K562 (cell line): ENCODE measurements at regions of chr1 and their contacts with region 1.

Region 1: GRCh38 chr1:3900119-3900968 is at the start of gene C1orf174:
- DNase-seq: peak; percentile 95 to 99 (median 96)
- ATAC-seq: peak; percentile 90
- H3K4me3 ChIP-seq: peak within 1 kb of the TSS; percentile 74
- H3K27ac ChIP-seq: peak within 1 kb of the TSS; percentile 100
- H3K4me1 ChIP-seq: peaks cover 0 to 36% of the 10 kb centered on the region in 2 experiments; a peak in 4 of 5 replicates
- H3K27me3 ChIP-seq: no peaks in the 10 kb centered on the region
- CTCF ChIP-seq: no peak
- EP300 ChIP-seq: 0 out of 2 replicates have a peak, but pooled peaks have one; percentile 23
- POLR2A ChIP-seq: peak; percentile 72
- RAD21 ChIP-seq: no peak
- polyA plus RNA-seq, gene C1orf174: 42.0 to 50.2 TPM

Region 2: GRCh38 chr1:3649342-3650247 is 250.7 kb before region 1 on chr1 and contains the start of gene WRAP73:
- CTCF ChIA-PET with region 1: no interaction called
- POLR2A ChIA-PET with region 1: no interaction called
- in situ Hi-C with region 1: no loop called
- intact Hi-C with region 1: loop called (anchors 1 kb)
- DNase-seq: peak; percentile 93 to 98 (median 94)
- ATAC-seq: peak; percentile 96
- H3K4me3 ChIP-seq: peak within 1 kb of the TSS; percentile 70
- H3K27ac ChIP-seq: peak within 1 kb of the TSS; percentile 29; the same call in 2 of the 3 replicates
- H3K4me1 ChIP-seq: peaks cover 11 to 38% of the 10 kb centered on the region in 2 experiments
- H3K27me3 ChIP-seq: peaks cover 19 to 25% of the 10 kb centered on the region in 2 experiments; a peak in 4 of 5 replicates
- CTCF ChIP-seq: peak; percentile 63 to 66 (median 64); a peak in 5 of 6 replicates
- EP300 ChIP-seq: peak; percentile 23; the same call in 1 of the 2 replicates
- POLR2A ChIP-seq: peak; percentile 83
- RAD21 ChIP-seq: peak in 1 of 2 experiments; percentile 36; a peak in 2 of 4 replicates
- polyA plus RNA-seq, gene WRAP73: 4.3 to 4.7 TPM

Region 3: DNA sequence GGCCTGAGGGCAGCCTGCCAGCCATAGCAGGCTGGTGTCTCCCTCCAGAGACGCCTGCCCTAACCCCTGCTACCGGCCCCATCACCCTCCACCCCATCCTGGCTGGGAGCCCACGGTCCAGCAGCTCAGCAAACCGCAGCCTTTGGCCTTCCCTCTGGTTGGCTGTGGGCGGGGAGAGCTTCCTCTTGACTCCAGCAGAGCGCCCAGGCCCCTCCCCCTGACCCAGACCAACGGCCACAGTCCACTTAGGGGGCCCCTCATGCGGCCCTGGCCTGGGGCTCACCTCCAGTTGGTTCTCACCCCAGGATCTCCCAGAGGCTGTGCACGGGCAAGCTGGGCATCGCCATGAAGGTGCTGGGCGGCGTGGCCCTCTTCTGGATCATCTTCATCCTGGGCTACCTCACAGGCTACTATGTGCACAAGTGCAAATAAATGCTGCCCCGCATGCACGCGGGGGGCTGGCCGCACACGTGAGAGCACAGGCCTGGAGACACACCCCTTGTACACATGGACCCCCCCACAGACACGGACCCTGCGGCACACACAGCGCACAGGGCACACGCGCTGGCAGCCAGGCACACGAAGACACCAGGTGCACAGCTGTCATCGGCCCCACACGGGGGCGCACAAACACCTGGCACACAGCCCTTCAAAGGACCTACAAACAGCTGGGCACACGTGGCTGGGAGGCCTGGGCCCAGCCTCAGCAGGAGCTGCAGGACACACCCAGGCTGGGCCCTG is 124.7 kb before region 1 on chr1:
- CTCF ChIA-PET with region 1: interaction called, 5 read pairs
- POLR2A ChIA-PET with region 1: interaction called, 4 read pairs
- in situ Hi-C with region 1: no loop called
- intact Hi-C with region 1: loop called (anchors 2 kb)
- DNase-seq: peak; percentile 85 to 98 (median 91)
- ATAC-seq: peak; percentile 71
- H3K4me3 ChIP-seq: peak overlapping the region; percentile 7; the same call in 1 of the 2 replicates
- H3K27ac ChIP-seq: peak overlapping the region; percentile 66
- H3K4me1 ChIP-seq: peaks cover 26 to 87% of the 10 kb centered on the region in 2 experiments
- H3K27me3 ChIP-seq: no peaks in the 10 kb centered on the region
- CTCF ChIP-seq: peak; percentile 66 to 79 (median 69)
- EP300 ChIP-seq: no peak; the same call in 1 of the 2 replicates
- POLR2A ChIP-seq: peak; percentile 47; the same call in 1 of the 2 replicates
- RAD21 ChIP-seq: peak; percentile 15 to 66; a peak in 3 of 4 replicates

Region 4: DNA sequence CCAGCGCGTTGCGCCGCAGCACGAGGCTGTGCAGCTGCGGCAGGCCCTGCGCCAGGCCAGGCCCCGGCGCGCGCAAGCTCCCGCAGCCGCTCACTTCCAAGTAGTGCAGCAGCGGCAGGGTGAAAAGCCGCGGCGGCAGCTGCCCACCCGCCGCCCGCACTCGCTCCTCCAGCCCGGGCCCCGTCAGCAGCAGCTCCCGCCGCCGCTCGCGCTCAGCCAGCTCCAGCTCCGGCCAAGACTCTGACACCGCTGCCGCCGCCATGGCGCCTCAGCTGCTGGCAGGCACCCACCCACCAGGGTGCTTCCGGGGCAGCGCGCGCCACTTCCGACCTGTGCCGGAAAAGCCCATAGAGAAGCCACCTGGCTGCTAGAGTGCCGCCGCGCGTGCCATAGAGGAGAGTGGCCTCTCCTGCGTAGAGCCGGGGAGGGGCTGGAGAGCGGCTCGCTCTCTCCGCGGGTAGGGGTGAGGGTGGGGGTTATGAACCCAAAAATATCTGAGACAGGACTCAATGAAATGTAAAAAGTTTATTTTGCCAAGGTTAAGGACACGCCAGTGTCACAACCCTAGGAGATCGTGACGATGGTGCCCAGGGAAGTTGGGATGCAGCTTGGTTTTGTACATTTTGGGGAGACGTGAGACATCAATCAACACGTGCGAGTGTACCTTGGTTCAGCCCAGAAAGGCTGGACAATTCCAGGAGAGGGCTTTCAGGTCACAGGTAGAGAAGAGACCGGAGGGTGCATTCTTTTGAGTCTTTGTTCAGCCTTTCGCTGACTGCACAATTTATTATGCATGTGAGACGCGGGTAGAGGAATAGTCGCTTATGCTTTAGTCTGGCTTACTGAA is 103.9 kb before region 1 on chr1 and contains the start of gene LRRC47:
- CTCF ChIA-PET with region 1: no interaction called
- POLR2A ChIA-PET with region 1: interaction called, 3 read pairs
- in situ Hi-C with region 1: no loop called
- intact Hi-C with region 1: loop called (anchors 1 kb)
- DNase-seq: peak; percentile 95 to 98 (median 97)
- ATAC-seq: peak; percentile 98
- H3K4me3 ChIP-seq: peak within 1 kb of the TSS; percentile 82
- H3K27ac ChIP-seq: peak within 1 kb of the TSS; percentile 61
- H3K4me1 ChIP-seq: peaks cover 25 to 39% of the 10 kb centered on the region in 2 experiments
- H3K27me3 ChIP-seq: no peaks in the 10 kb centered on the region
- CTCF ChIP-seq: peak in 1 of 3 experiments; percentile 18; a peak in 1 of 6 replicates
- EP300 ChIP-seq: peak; percentile 68; the same call in 1 of the 2 replicates
- POLR2A ChIP-seq: peak; percentile 82
- RAD21 ChIP-seq: no peak
- polyA plus RNA-seq, gene LRRC47: 4.6 to 5.3 TPM

Region 5: DNA sequence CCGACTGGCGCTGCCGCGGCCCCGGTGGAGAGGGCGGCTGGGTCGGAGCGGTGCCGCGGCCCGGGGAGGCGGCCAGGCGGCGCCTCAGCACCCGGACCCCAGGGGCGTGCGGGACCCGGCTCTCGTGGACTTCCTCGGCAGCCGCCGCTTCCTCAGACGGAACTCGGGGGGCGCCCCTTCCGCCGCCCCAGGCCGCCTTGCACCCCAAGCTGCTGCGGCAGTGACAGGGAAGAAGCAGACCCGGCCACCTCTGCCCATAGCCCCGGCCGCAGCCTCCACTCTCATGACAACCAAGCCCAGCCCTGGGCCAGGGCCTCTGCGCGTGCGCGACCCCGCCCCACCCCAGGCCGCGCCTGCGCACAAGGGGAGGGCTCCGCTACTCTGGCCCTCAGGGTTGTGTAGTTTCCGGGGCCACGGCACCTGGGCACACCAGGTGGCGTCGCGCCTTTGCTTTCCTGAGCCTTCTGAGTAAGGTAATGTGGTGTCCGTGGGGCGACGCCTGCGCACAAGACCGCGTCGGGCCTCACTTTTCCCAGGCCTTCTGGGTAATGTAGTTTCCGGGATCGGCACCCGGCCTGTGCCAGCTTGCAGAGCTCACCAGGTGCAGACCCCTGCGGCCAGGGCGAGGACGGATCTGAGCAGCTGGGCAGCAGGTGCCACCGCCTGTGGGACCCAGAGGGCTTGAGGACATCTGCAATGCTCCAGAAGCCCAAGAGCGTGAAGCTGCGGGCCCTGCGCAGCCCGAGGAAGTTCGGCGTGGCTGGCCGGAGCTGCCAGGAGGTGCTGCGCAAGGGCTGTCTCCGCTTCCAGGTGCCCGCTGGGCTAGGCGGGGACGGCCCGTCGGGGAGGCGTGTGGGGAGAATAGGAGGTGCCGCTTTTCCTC is 43.2 kb before region 1 on chr1 and contains the starts of genes CEP104 and DFFB:
- CTCF ChIA-PET with region 1: no interaction called
- POLR2A ChIA-PET with region 1: interaction called, 3 read pairs
- in situ Hi-C with region 1: no loop called
- intact Hi-C with region 1: loop called (anchors 1 kb)
- DNase-seq: peak; percentile 100
- ATAC-seq: peak; percentile 98
- H3K4me3 ChIP-seq: peak within 1 kb of the TSS; percentile 90
- H3K27ac ChIP-seq: peak within 1 kb of the TSS; percentile 68
- H3K4me1 ChIP-seq: peaks cover 10 to 37% of the 10 kb centered on the region in 2 experiments; a peak in 3 of 5 replicates
- H3K27me3 ChIP-seq: no peaks in the 10 kb centered on the region
- CTCF ChIP-seq: peak; percentile 72 to 91 (median 85)
- EP300 ChIP-seq: no peak
- POLR2A ChIP-seq: peak; percentile 79
- RAD21 ChIP-seq: peak; percentile 53 to 76
- polyA plus RNA-seq, gene CEP104: 11.2 to 13.4 TPM
- polyA plus RNA-seq, gene DFFB: 2.3 to 6.6 TPM

Region 6: GRCh38 chr1:3869751-3870301 is 30.5 kb before region 1 on chr1:
- CTCF ChIA-PET with region 1: no interaction called
- POLR2A ChIA-PET with region 1: interaction called, 3 read pairs
- in situ Hi-C with region 1: no loop called
- intact Hi-C with region 1: loop called (anchors 1 kb)
- DNase-seq: peak; percentile 81 to 93 (median 86)
- ATAC-seq: peak; percentile 100
- H3K4me3 ChIP-seq: no peak overlapping the region
- H3K27ac ChIP-seq: no peak overlapping the region
- H3K4me1 ChIP-seq: peaks cover 17 to 32% of the 10 kb centered on the region in 2 experiments; a peak in 4 of 5 replicates
- H3K27me3 ChIP-seq: no peaks in the 10 kb centered on the region
- CTCF ChIP-seq: peak; percentile 70 to 84 (median 71)
- EP300 ChIP-seq: peak; percentile 24; the same call in 1 of the 2 replicates
- POLR2A ChIP-seq: no peak
- RAD21 ChIP-seq: peak in 1 of 2 experiments; percentile 56; a peak in 2 of 4 replicates

Region 7: GRCh38 chr1:3886691-3887090 is 13.7 kb before region 1 on chr1:
- CTCF ChIA-PET with region 1: no interaction called
- POLR2A ChIA-PET with region 1: interaction called, 12 read pairs
- in situ Hi-C with region 1: no loop called
- intact Hi-C with region 1: no loop called
- DNase-seq: no peak
- ATAC-seq: no peak
- H3K4me3 ChIP-seq: no peak overlapping the region
- H3K27ac ChIP-seq: no peak overlapping the region
- H3K4me1 ChIP-seq: peaks cover 0 to 3% of the 10 kb centered on the region in 2 experiments; a peak in 1 of 5 replicates
- H3K27me3 ChIP-seq: no peaks in the 10 kb centered on the region
- CTCF ChIP-seq: no peak
- EP300 ChIP-seq: no peak
- POLR2A ChIP-seq: no peak
- RAD21 ChIP-seq: no peak

Region 8: DNA sequence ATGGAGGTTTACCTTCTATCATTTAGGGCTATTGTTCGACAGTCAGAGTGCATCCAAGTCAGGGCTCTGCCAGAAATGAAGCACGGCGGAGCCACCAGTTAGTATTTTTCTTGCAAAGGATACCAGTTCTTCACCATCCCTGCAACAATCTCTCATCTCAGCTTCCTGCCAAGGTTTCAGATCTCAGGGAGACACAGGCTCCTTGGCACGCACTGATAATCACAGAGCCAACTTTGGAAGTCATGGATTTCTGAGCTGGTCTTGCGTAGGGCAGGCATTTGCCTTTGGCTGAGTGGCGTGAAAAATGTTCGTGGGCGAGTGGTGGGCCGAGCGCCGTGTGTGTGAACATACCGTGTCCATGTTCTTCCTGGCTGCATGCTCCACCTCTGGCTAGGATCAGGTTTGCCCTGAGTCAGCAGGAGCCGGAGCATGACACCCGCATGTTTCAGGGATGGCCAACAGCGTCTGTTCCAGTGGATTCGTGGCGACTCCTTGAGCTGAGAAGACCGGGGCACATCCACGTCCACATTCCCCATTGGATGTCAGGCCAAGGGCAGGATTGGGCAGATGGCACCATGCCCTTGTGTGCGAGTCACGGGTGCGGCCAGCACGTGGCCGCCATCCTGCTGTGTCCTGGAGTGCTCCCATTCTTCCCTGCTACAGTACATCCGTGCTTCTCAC is 118.3 kb after region 1 on chr1:
- CTCF ChIA-PET with region 1: no interaction called
- POLR2A ChIA-PET with region 1: no interaction called
- in situ Hi-C with region 1: no loop called
- intact Hi-C with region 1: no loop called
- DNase-seq: no peak
- ATAC-seq: no peak
- H3K4me3 ChIP-seq: no peak overlapping the region
- H3K27ac ChIP-seq: no peak overlapping the region
- H3K4me1 ChIP-seq: peaks cover 0 to 7% of the 10 kb centered on the region in 2 experiments; a peak in 2 of 5 replicates
- H3K27me3 ChIP-seq: peaks cover 9 to 54% of the 10 kb centered on the region in 2 experiments; a peak in 4 of 5 replicates
- CTCF ChIP-seq: no peak
- EP300 ChIP-seq: no peak
- POLR2A ChIP-seq: no peak
- RAD21 ChIP-seq: no peak